ENCODE measurements at regions of chr1 and their contacts with region 1.

Region 1: DNA sequence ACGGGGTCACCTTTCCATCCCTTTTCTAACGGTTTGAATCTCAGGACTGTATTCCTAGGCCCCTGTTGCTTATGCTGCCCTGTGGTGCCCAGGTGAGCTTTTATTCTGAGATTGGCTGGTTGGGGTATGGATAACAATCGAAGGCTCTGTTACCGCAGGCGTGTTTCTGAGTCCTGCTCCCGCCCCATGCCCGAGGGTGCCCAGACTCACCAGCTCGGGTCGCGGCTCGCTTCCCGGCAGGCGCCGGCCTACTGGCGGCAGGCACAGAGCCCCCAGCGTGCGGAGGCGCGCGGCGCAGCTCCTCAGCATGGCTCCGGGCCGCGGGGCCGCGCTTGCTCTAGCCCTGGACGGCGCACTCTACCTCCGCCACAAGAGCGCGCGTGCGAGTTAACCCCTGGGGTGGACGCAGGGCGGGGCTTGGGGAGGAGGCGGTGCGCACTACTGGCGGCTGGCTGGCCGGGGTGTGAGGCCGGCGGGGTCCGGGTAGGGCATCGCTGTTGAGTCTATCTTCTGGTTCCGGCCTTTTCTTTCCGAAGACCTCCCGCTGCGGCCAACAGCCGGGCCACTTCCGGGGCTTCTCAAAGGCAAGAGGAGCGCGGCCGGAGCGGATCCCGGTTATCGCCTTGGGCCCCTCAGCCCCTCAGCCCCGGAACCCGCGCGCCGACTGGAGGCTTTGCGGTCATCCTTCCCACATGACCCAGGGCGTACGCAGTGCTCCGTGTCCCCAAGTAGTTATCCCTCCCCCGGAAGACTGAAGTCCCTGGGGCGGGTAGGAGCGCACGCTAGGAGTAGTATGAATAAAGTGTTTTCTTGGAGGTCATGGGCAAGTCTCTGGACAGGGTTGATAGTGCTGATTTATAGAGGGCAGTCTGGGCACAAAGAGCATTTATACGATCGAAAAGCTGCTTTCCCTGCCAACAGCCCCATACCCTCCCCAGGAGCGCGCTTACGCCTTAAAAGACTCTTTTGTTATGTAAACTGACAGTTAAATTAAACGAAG is at the start of gene THEM4:
- DNase-seq: peak; percentile 81 to 90 (median 83)
- H3K4me3 ChIP-seq: peak within 1 kb of the TSS; percentile 76 to 79
- H3K4me3 Mint-ChIP-seq: peak within 1 kb of the TSS; percentile 83 to 91 (median 86)
- H3K27ac ChIP-seq: peak within 1 kb of the TSS; percentile 61
- H3K27ac Mint-ChIP-seq: peak within 1 kb of the TSS; percentile 73 to 94 (median 89)
- H3K4me1 ChIP-seq: peaks cover 53% of the 10 kb centered on the region
- H3K4me1 Mint-ChIP-seq: peaks cover 22 to 48% (median 39%) of the 10 kb centered on the region in 4 donors
- H3K27me3 ChIP-seq: no peaks in the 10 kb centered on the region
- H3K27me3 Mint-ChIP-seq: no peaks in the 10 kb centered on the region
- total RNA-seq, gene THEM4: 105 to 106 TPM

Region 2: DNA sequence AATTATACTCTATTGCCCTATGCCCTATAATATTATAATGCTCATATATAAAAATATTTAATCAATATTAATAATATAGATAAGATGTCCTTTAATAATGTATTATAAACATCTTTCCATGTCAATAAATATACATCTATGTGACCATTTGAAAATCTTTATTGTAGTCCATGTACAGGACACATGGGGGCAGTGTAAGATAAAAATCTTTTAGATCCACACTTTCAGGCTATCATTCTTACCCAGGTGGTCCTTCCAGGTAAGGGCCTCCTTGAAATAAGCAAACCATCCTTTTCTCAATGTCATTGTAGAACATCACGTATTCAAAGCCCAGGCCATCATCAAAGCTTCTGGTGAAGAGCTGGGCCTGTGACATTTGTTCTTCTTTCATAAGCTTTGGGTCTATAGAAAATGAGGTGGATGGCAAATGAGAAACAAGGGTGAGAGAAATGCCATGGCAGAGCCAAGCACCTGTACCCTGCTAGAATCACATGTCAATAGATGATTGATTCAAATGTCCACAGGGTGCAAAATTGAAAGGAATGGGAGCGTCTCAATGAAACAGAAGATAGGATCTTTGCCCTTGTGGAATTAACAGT is 20.4 kb before region 1 on chr1:
- CTCF ChIA-PET with region 1: interaction called, 16 read pairs
- POLR2A ChIA-PET with region 1: interaction called, 248 read pairs
- intact Hi-C with region 1: loop called (anchors 2 kb)
- DNase-seq: peak in 4 of 5 donors; percentile 27 to 45 (median 34)
- H3K4me3 ChIP-seq: no peak overlapping the region
- H3K4me3 Mint-ChIP-seq: no peak overlapping the region
- H3K27ac ChIP-seq: no peak overlapping the region
- H3K27ac Mint-ChIP-seq: peak overlapping the region in 6 of 7 donors; percentile 18 to 84 (median 64)
- H3K4me1 ChIP-seq: peaks cover 21% of the 10 kb centered on the region
- H3K4me1 Mint-ChIP-seq: peaks cover 27 to 38% (median 33%) of the 10 kb centered on the region in 4 donors
- H3K27me3 ChIP-seq: no peaks in the 10 kb centered on the region
- H3K27me3 Mint-ChIP-seq: no peaks in the 10 kb centered on the region

Region 3: GRCh38 chr1:151924679-151925587 is 15.5 kb after region 1 on chr1:
- CTCF ChIA-PET with region 1: interaction called, 6 read pairs
- POLR2A ChIA-PET with region 1: interaction called, 12 read pairs
- intact Hi-C with region 1: no loop called
- DNase-seq: peak in 1 of 5 donors; percentile 24
- H3K4me3 ChIP-seq: no peak overlapping the region
- H3K4me3 Mint-ChIP-seq: peak overlapping the region in 6 of 8 donors; percentile 3 to 55 (median 40)
- H3K27ac ChIP-seq: no peak overlapping the region
- H3K27ac Mint-ChIP-seq: peak overlapping the region; percentile 51 to 84 (median 68)
- H3K4me1 ChIP-seq: peaks cover 16% of the 10 kb centered on the region
- H3K4me1 Mint-ChIP-seq: peaks cover 9 to 11% (median 9%) of the 10 kb centered on the region in 4 donors
- H3K27me3 ChIP-seq: no peaks in the 10 kb centered on the region
- H3K27me3 Mint-ChIP-seq: no peaks in the 10 kb centered on the region

Region 4: DNA sequence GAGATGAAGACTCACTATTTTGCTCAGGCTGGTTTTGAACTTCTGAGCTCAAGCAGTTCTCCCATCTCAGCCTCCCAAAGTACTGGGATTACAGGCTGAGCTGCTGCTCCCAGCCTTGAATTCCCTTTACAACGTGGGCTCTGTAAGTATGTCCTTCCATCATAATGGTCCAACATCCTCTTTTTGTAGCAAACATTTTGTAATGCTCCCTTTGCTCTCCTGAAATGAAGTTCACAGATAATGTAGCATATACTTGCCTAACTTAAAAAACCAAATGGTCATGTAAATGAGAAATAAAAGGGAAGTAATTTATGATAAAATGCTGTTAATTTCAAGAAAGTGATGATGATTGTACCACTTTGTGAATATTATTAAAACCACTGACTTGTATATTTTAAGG is 30.3 kb after region 1 on chr1:
- CTCF ChIA-PET with region 1: interaction called, 13 read pairs
- POLR2A ChIA-PET with region 1: interaction called, 23 read pairs
- intact Hi-C with region 1: loop called (anchors 2 kb)
- DNase-seq: no peak
- H3K4me3 ChIP-seq: no peak overlapping the region
- H3K4me3 Mint-ChIP-seq: no peak overlapping the region
- H3K27ac ChIP-seq: no peak overlapping the region
- H3K27ac Mint-ChIP-seq: peak overlapping the region in 1 of 7 donors; percentile 48
- H3K4me1 ChIP-seq: peaks cover 36% of the 10 kb centered on the region
- H3K4me1 Mint-ChIP-seq: peaks cover 25 to 31% (median 26%) of the 10 kb centered on the region in 4 donors
- H3K27me3 ChIP-seq: no peaks in the 10 kb centered on the region
- H3K27me3 Mint-ChIP-seq: peaks cover 0 to 4% of the 10 kb centered on the region in 2 donors

Region 5: DNA sequence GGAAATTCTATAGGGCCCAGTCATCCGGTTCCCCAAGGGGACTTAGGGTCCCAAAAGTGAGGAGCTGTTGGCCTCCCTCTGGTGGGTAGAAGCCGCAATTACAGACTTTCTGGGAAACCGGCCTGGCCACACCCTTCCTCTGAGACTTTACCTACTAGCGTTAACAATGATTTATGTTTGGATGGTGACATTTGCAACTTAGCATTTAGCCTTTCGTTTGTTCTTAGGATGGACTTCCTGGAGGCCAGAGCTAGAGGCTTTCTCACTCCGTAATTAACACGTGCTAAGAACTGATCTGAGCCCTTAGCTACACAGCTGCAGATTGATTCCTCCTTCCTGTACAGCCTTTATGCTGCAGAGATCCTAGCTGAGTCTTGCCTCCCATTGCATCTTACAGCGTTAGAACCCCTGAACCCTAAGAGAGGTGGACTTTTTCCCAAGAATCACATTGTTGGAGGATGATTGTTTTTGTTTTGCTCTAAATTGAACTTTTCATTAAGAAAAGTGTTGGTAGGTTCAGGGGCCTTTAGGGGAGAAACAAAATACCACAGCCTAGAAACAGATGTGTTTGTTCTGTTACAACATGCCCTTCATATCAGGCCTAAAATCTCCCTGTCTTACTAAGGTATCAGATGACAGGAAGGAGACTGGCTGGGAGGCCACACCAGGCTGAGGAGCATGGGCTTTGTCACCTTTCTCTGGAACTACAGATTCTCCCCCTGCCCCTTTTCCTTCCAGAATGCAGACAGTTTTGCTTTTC is 125.4 kb after region 1 on chr1:
- CTCF ChIA-PET with region 1: interaction called, 4 read pairs
- POLR2A ChIA-PET with region 1: interaction called, 29 read pairs
- intact Hi-C with region 1: no loop called
- DNase-seq: peak; percentile 75 to 87 (median 80)
- H3K4me3 ChIP-seq: peak overlapping the region; percentile 73 to 77
- H3K4me3 Mint-ChIP-seq: peak overlapping the region; percentile 91 to 100 (median 100)
- H3K27ac ChIP-seq: peak overlapping the region; percentile 88
- H3K27ac Mint-ChIP-seq: peak overlapping the region; percentile 97 to 100 (median 99)
- H3K4me1 ChIP-seq: peaks cover 38% of the 10 kb centered on the region
- H3K4me1 Mint-ChIP-seq: peaks cover 23 to 54% (median 43%) of the 10 kb centered on the region in 4 donors
- H3K27me3 ChIP-seq: no peaks in the 10 kb centered on the region
- H3K27me3 Mint-ChIP-seq: no peaks in the 10 kb centered on the region

Measured in CD4-positive, alpha-beta memory T cell (primary cell).